ENCODE measurements at regions of chr3 and their contacts with region 1.

Region 1: DNA sequence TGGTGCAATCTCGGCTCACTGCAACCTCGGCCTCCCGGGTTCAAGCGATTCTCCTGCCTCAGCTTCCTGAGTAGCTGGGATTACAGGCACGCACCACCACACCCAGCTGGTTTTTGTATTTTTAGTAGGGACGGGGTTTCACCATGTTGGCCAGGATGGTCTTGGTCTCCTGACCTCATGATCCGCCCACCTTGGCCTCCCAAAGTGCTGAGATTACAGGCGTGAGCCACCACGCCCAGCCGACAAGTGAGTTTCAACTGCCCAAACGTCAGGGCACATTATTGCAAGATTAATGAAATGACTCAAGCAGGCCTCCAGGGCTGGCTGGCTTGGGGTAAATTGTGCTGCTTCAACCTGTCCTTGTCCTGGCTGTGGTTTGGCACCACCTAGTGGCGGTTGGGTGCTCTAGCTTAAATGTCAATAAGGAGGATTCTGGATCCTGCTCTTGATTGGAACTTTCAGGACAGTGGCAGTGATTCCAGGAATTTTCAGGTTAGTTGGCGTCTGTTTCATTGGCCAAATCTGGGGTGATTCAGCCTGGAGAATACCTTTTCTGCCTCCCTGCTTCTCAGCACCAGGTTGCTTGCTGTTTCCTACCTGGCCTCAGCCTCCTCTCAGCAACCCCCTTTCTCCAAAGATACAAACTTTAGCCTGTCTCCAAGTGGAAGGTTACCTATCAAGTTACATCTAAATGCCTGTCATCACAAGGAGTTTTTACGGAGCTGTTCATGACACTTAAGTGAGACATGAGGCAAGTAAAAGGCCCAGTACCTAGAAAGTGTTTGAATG is 32.4 kb upstream of the SACM1L start:
- DNase-seq: peak; percentile 52
- H3K4me3 ChIP-seq: no peak overlapping the region
- H3K27me3 ChIP-seq: no peaks in the 10 kb centered on the region
- CTCF ChIP-seq: peak; percentile 82

Region 2: GRCh38 chr3:45507820-45508317 is 148.9 kb before region 1 on chr3:
- CTCF ChIA-PET with region 1: interaction called, 126 read pairs
- POLR2A ChIA-PET with region 1: interaction called, 3 read pairs
- DNase-seq: no peak
- H3K4me3 ChIP-seq: no peak overlapping the region
- H3K27me3 ChIP-seq: no peaks in the 10 kb centered on the region
- CTCF ChIP-seq: peak; percentile 64

Region 3: GRCh38 chr3:45524565-45524964 is 132.2 kb before region 1 on chr3:
- CTCF ChIA-PET with region 1: interaction called, 11 read pairs
- POLR2A ChIA-PET with region 1: no interaction called
- DNase-seq: peak; percentile 36
- H3K4me3 ChIP-seq: no peak overlapping the region
- H3K27me3 ChIP-seq: no peaks in the 10 kb centered on the region
- CTCF ChIP-seq: no peak

Region 4: DNA sequence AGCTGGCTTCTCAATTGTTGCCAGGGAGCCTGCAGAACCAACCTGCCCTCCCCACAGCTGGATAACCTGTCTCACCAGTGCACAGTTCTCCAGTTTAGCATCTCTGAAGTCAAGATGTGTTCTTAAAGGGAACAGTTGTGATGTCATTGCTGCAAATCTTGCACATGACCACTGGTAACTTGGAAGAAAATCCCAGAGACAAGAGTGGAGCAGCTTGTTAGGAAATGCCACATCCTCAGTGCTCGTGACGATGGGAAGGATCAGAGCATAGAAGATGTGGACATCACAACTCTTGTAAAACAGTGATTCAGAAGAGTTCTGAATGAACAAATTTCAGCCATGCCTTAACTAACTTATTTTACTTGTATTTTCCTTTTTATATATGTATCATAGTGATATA is 98.3 kb before region 1 on chr3:
- CTCF ChIA-PET with region 1: interaction called, 11 read pairs
- POLR2A ChIA-PET with region 1: no interaction called
- DNase-seq: no peak
- H3K4me3 ChIP-seq: no peak overlapping the region
- H3K27me3 ChIP-seq: no peaks in the 10 kb centered on the region
- CTCF ChIP-seq: no peak

Region 5: DNA sequence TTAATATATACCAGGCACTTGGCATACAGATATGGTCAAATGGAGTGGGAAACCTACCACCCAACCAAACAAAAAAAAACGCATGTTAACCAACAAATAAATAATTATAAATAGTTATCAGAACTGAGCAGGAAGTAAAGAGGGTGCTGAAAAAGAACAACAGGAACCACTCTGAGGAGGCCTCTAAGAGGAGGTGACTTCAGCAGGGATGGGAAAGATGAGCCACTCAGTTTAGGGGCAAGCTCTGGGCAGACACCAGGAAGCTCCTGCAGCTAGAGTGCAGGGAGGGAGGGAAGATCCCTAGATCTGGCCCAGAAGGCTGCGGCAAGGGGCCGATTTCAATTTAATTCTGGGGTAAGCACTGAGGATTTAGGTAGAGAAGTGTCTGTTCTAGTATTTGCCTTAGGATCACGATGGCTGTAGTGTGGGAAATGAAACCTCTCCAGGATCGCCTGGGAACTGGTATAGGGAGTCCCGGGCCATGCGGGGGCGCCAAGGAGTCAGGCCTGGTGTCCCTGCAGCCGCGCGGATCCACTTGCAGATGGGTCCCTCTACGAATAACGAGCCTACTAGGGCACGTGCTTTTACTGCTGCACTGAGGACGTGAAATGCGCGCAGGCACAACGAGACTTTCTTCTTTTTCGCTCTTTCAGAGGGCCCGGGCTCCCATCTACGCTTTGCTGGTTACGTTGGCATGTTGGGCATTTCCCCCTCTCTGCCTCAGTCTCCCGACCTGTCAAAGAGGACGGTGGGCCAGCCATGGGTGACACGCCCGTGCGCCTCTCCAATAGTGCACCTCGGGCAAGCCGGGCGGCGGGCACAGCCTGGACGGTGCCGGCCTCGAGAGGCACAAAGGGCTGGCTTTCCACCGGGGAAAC is 63.7 kb before region 1 on chr3:
- CTCF ChIA-PET with region 1: interaction called, 22 read pairs
- POLR2A ChIA-PET with region 1: no interaction called
- DNase-seq: peak; percentile 46
- H3K4me3 ChIP-seq: peak overlapping the region; percentile 63
- H3K27me3 ChIP-seq: no peaks in the 10 kb centered on the region
- CTCF ChIP-seq: peak; percentile 95

Region 6: GRCh38 chr3:45724911-45725310 is 68.1 kb after region 1 on chr3:
- CTCF ChIA-PET with region 1: no interaction called
- POLR2A ChIA-PET with region 1: no interaction called
- DNase-seq: no peak
- H3K4me3 ChIP-seq: no peak overlapping the region
- H3K27me3 ChIP-seq: no peaks in the 10 kb centered on the region
- CTCF ChIP-seq: no peak

Region 7: GRCh38 chr3:45751537-45752242 is 94.9 kb after region 1 on chr3:
- CTCF ChIA-PET with region 1: no interaction called
- POLR2A ChIA-PET with region 1: no interaction called
- DNase-seq: no peak
- H3K4me3 ChIP-seq: no peak overlapping the region
- H3K27me3 ChIP-seq: no peaks in the 10 kb centered on the region
- CTCF ChIP-seq: no peak

Region 8: DNA sequence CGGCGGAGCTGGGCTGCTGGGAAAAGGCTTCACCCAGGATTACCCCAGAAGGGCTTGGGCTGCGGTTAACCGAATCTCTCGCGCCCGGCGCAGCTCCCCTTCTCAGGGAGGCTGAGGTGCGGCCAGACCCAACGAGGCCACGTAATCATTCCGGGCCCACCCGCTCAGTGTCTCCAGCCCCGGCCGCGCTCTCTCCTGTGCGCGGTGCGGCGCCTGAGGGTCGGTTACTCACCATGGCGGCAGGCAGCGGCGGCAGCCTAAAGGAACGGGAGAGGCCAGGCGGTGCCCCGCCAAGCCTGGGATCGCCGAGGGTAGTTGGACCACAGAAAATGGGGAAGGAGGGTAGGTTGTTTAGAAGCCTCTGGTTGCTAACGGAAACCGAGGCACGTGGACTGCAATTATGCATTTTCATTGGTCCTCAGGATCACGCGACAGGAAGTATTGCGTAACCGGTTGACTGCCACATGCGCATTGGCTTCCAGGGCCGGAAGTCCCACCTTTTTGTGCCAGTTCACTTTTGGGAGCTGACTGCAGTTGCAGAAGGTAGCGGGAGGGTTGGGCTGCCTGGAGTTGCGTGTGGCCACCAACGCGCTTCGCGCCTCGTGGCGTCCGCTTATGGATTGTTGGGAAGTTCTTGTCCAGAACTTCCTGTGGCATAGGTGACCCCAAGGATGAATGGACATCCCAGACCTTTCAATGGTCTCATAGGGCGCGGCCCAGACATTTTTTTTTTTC is 185.2 kb after region 1 on chr3 and contains the start of gene LZTFL1:
- CTCF ChIA-PET with region 1: no interaction called
- POLR2A ChIA-PET with region 1: no interaction called
- DNase-seq: peak; percentile 88
- H3K4me3 ChIP-seq: peak within 1 kb of the TSS; percentile 71
- H3K27me3 ChIP-seq: no peaks in the 10 kb centered on the region
- CTCF ChIP-seq: no peak
- polyA plus RNA-seq, gene LZTFL1: 12.9 and 24.7 TPM in 2 replicates